ENCODE measurements at regions of chr10 and their contacts with region 1.

Region 1: DNA sequence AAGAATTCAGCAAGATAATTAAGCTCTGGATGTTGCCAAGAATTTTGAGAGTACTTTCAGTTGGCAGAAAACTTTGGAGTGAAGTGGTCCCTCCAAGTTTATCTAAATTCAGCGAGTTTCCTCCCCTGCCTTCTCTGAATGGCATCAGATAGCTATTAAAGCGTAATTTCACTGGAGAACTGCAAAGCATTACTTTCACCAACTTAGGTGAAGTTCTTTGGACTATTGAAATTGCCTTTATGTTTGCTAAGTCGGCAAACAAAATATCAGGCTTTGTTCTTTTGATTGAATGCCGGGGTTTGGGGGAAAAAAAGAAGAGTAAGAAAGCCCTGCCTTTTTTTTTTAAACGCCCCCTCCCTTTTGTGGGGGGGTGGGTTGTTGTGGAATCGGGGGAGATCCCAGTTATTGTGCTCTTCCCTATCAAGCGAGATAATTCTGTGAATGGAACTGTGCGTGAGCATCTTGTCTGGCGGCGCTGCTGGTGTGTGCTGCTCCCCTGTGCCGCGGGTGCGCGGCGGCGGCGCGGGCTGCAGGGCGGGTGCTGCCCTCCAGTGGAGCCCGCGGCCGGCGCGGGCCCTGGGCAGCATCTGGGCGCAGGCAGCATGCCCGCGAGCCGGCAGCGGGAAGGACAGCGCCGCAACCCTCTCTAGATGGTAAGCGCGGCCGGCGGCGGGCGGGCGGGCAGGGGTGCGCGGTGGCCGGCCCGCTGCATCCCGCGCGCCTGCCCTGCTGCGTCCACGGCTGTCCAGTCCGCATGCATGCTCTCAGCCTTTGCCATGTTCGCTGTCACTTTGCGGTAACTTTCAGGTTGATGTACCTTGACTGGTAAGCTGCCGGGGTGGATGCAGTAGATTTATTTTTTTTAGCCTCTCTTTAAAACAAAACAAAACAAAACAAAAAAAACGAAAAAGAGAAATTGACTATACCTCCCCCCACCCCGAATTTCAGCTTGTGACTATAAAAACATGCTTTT is 176.5 kb downstream of the TCF7L2 start:
- DNase-seq: peak; percentile 73 to 91 (median 86)
- ATAC-seq: peak; percentile 95 to 97
- H3K4me3 ChIP-seq: peak overlapping the region; percentile 27
- H3K27ac ChIP-seq: no peak overlapping the region
- H3K4me1 ChIP-seq: no peaks in the 10 kb centered on the region
- H3K27me3 ChIP-seq: no peaks in the 10 kb centered on the region

Region 2: DNA sequence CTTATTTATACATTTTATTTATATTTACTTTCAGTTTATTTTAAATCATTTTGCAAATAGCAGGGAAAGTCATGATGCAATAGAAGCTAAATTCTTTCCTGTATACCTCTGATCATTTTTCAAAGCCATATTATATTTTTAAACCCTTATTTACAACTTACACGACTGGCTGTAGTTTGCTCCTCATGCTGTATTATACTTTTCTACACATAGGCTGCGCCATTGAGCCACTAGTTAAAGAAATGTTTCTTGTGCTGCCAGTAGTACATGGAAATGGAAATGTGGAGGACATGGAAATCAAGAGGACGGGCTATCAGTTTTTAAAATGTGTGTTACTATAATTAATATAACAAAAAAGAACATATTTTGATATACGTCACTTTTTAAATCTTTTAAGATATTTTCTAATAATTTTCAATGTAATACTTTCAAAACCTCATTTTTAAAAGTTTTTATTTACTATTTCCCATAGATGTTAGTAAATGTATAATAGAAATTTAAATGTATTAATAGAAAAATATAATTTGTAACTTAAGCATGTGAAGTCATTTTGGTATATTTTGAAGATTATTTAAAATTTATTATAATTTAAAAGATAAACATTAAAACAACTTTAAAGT is 561.0 kb before region 1 on chr10:
- intact Hi-C with region 1: loop called in 1 of 4 experiments (anchors 10 kb)
- DNase-seq: no peak
- ATAC-seq: peak in 1 of 2 donors; percentile 62
- H3K4me3 ChIP-seq: no peak overlapping the region
- H3K27ac ChIP-seq: no peak overlapping the region
- H3K4me1 ChIP-seq: no peaks in the 10 kb centered on the region
- H3K27me3 ChIP-seq: no peaks in the 10 kb centered on the region

Region 3: DNA sequence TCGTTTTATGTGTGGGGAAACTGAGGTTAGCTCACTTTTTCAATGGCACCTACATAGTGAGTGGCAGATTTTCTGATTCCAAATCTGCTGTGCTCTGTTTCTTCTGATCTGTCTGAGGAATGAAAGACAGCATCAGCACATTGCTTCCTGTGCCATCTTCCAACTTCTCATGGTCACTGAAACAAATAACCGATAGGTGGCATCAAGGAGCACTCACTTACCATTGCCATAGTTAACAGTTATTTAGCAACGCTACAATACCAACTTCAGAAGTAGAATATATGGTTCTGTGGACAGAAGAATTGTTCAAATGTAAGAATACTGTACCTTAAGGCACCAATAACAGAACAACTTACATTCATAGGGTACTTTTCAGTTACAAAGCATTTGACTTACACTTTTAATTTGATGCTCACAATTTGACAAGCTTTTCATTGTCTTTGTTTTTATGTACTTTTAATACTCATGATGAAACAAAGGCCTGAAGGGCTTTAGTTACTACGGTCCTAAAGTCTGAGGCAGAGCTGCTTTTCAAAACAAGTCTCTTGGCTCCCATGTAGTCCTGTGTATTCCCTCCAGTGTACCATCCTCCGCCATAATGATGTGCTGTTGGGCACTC is 405.3 kb before region 1 on chr10:
- intact Hi-C with region 1: loop called in 3 of 4 experiments (anchors 10 kb)
- DNase-seq: no peak
- ATAC-seq: peak; percentile 60 to 71
- H3K4me3 ChIP-seq: no peak overlapping the region
- H3K27ac ChIP-seq: no peak overlapping the region
- H3K4me1 ChIP-seq: no peaks in the 10 kb centered on the region
- H3K27me3 ChIP-seq: no peaks in the 10 kb centered on the region

Region 4: DNA sequence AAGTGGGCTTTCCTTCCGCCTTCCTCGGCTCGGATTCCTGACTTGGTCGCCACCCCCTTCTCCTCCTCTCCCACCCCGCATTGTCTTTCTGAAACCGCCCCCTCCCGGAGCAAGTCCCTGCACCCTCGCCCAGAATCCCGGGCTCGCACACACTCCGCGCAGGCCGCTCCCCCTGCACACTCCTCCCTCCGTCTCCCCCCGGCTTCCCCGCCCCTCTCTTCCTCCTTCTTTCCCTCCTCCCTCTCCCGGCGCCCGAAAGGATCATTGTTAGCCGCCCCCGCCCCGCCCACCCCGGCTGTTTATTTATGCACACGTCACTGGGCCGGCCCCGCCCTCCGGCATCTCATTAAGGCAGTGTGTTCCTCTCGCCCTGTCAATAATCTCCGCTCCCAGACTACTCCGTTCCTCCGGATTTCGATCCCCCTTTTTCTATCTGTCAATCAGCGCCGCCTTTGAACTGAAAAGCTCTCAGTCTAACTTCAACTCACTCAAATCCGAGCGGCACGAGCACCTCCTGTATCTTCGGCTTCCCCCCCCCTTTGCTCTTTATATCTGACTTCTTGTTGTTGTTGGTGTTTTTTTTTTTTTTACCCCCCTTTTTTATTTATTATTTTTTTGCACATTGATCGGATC is 176.5 kb before region 1 on chr10 and contains the start of gene TCF7L2:
- intact Hi-C with region 1: loop called in 3 of 4 experiments (anchors 5 to 10 kb)
- DNase-seq: peak; percentile 96 to 99 (median 98)
- ATAC-seq: peak; percentile 96
- H3K4me3 ChIP-seq: peak within 1 kb of the TSS; percentile 100
- H3K27ac ChIP-seq: peak within 1 kb of the TSS; percentile 98
- H3K4me1 ChIP-seq: peaks cover 4% of the 10 kb centered on the region
- H3K27me3 ChIP-seq: no peaks in the 10 kb centered on the region
- total RNA-seq, gene TCF7L2: 15.6 to 18.7 (median 16.6) TPM

Region 5: GRCh38 chr10:113027574-113028455 is 98.7 kb before region 1 on chr10:
- intact Hi-C with region 1: no loop called
- DNase-seq: no peak
- ATAC-seq: peak; percentile 50 to 76
- H3K4me3 ChIP-seq: no peak overlapping the region
- H3K27ac ChIP-seq: peak overlapping the region; percentile 45
- H3K4me1 ChIP-seq: peaks cover 17% of the 10 kb centered on the region
- H3K27me3 ChIP-seq: no peaks in the 10 kb centered on the region

Region 6: DNA sequence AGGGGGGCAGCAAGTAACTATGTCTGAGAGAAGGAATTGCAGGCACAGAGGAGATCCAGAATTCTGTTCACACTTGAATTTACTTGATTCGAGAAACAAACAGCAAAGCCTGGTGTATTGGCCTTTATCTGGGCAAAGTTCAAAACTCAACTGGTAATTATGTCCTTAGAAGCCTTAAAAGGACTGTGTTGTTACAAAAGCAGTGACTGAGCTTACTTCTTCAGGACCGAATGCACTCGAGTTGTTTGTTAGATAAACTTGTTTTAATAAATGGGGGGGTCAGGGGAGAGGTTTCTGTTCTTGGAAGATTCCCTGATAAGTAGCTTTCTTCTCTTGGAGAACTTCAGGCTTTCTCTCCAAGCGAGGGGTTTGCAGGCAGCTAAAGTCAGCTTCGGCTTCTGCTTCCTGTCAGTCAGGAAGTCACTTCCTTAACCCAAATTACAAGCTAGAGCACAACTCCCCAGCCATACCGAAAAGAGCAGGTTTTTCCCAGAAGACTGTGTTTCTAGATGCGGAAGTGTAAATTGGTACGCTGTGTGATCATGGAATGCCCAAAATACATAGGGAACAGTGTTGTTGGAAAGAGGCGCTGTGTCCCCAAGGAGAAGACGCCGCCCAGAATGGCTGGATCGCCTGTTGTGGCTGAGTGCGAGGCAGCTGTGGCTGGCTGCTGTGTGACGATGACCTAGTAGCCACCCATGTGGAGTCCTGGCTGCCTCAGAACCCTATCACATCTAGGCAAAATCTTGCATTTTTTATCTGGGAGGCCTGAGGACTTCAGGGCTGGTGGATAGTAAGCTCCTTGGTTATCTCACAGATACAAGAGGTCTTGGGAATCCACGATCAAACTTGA is 66.1 kb before region 1 on chr10:
- intact Hi-C with region 1: loop called in 1 of 4 experiments (anchors 10 kb)
- DNase-seq: peak; percentile 75 to 93 (median 85)
- ATAC-seq: peak; percentile 76 to 83
- H3K4me3 ChIP-seq: peak overlapping the region; percentile 33
- H3K27ac ChIP-seq: peak overlapping the region; percentile 92
- H3K4me1 ChIP-seq: peaks cover 31% of the 10 kb centered on the region
- H3K27me3 ChIP-seq: no peaks in the 10 kb centered on the region

Region 7: DNA sequence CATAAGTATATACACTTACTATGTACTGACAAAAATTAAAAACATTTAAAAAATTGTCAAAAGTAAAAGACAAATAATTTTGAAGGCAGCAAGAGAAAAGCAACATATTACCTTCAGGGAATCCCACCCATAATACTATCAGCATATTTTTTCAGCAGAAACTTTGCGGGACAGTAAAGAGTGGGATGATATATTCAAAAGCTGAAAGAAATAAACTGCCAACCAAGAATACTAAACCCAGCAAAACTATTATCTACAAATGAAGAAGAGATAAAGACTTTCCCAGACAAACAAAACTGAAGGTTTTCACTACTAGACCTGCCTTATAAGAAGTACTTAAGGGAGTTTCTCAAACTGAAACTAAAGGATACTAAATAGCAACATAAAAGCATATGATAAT is 81.4 kb after region 1 on chr10:
- intact Hi-C with region 1: no loop called
- DNase-seq: no peak
- ATAC-seq: no peak
- H3K4me3 ChIP-seq: no peak overlapping the region
- H3K27ac ChIP-seq: no peak overlapping the region
- H3K4me1 ChIP-seq: no peaks in the 10 kb centered on the region
- H3K27me3 ChIP-seq: no peaks in the 10 kb centered on the region